CD4-positive, alpha-beta memory T cell (primary cell): ENCODE measurements at regions of chr2 and their contacts with region 1.

Region 1: DNA sequence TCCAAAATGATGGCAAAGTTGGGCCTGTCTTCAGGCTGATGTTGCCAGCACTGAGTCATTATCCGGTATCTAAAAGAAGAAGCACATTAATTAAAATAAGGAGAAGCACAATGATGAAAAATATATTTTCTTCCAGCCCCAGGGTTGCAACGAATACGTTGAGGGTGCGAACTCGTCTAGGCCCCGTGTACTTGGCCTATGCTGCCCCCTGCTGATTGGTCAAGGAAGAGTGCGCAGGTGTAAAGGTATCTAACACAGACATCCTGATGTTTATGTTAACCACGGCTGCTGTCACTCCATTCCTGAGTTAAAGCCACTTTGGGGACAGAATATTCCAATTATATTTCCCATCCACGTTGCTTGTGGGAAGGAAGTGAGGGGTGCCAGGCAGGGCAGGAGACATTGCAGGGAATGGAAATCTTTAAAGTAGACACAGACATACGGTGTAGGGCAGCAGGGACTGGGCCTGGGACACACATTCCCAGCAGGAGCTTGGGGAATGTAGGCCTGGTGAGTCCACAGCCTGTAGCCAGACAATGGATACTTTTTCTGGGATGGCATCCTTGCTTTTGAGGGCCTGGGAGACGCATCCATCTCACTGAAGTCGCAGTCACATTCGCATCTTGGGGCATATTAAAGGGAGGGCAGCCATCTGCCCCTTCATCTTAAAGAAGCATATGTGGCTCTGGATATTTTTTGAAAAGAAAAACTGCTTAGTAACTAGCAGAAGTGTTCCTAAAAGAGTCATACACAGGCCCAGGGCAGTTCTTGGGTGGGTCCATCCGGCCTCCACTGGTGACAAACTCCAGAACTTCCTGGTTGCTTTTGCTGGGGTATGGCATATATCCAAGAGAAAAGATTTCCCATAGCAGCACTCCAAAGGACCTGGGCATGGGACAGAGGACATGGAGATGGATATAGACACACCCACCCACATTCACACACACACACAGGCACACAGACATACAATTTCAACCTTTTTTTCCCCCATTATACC is 81.9 kb downstream of the CLIP4 start:
- DNase-seq: peak; percentile 66 to 79 (median 71)
- H3K4me3 ChIP-seq: no peak overlapping the region
- H3K4me3 Mint-ChIP-seq: no peak overlapping the region
- H3K27ac ChIP-seq: no peak overlapping the region
- H3K27ac Mint-ChIP-seq: peak overlapping the region in 2 of 7 donors; percentile 15 to 81
- H3K4me1 ChIP-seq: no peaks in the 10 kb centered on the region
- H3K4me1 Mint-ChIP-seq: peaks cover 0 to 9% (median 1%) of the 10 kb centered on the region in 4 donors
- H3K27me3 ChIP-seq: no peaks in the 10 kb centered on the region
- H3K27me3 Mint-ChIP-seq: no peaks in the 10 kb centered on the region

Region 2: DNA sequence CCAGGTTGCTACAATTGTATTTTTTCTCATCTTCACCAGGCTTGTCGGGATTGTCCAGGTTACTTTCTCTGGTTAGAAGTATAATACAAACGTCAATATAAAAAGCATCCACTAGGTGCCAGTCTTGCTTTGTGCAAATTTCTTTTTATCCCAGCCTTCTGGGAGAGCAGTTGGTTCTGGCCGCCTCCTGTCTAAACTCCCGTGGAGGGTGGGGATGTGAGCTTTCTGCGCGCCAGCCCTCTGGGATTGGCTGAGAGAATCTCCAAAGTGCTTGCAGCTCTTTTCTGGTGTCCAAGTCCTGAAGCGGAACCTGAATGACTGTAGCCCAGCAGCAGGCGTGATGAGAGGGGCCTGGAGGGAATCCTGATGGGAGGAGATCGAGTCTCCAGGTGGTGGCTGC is 238.4 kb before region 1 on chr2:
- CTCF ChIA-PET with region 1: interaction called, 6 read pairs
- POLR2A ChIA-PET with region 1: no interaction called
- intact Hi-C with region 1: loop called (anchors 1 kb)
- DNase-seq: peak in 4 of 5 donors; percentile 51 to 67 (median 64)
- H3K4me3 ChIP-seq: no peak overlapping the region
- H3K4me3 Mint-ChIP-seq: no peak overlapping the region
- H3K27ac ChIP-seq: no peak overlapping the region
- H3K27ac Mint-ChIP-seq: peak overlapping the region in 1 of 7 donors; percentile 7
- H3K4me1 ChIP-seq: peaks cover 10% of the 10 kb centered on the region
- H3K4me1 Mint-ChIP-seq: peaks cover 0 to 10% (median 5%) of the 10 kb centered on the region in 4 donors
- H3K27me3 ChIP-seq: no peaks in the 10 kb centered on the region
- H3K27me3 Mint-ChIP-seq: no peaks in the 10 kb centered on the region

Region 3: GRCh38 chr2:29293845-29294438 is 96.9 kb after region 1 on chr2:
- CTCF ChIA-PET with region 1: no interaction called
- POLR2A ChIA-PET with region 1: no interaction called
- intact Hi-C with region 1: no loop called
- DNase-seq: peak in 1 of 5 donors; percentile 8
- H3K4me3 ChIP-seq: no peak overlapping the region
- H3K4me3 Mint-ChIP-seq: no peak overlapping the region
- H3K27ac ChIP-seq: no peak overlapping the region
- H3K27ac Mint-ChIP-seq: no peak overlapping the region
- H3K4me1 ChIP-seq: no peaks in the 10 kb centered on the region
- H3K4me1 Mint-ChIP-seq: no peaks in the 10 kb centered on the region
- H3K27me3 ChIP-seq: no peaks in the 10 kb centered on the region
- H3K27me3 Mint-ChIP-seq: peaks cover 11 to 55% of the 10 kb centered on the region in 2 donors